AG04449 (cell line): ENCODE measurements at regions of chr18 and their contacts with region 1.

Region 1: DNA sequence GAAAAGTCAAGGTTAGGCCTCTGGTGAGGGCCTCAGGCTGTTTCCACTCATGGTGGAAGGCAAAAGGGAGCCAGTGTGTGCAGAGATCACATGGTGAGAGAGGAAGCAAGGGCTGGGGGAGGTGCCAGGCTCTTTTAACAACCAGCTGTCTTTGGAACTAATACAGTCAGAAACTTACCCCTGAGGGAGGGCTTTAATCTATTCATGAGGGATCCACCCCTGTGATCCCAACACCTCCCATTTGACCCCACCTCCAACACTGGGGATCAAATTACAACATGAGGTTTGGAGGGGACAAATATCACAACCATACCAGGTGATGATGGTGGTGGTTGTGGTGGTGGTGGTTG is 10.9 kb downstream of the POLI start:
- DNase-seq: no peak
- H3K4me3 ChIP-seq: no peak overlapping the region
- CTCF ChIP-seq: no peak

Region 2: GRCh38 chr18:54269893-54270844 is 10.0 kb before region 1 on chr18:
- CTCF ChIA-PET with region 1: interaction called, 16 read pairs
- POLR2A ChIA-PET with region 1: no interaction called
- DNase-seq: no peak
- H3K4me3 ChIP-seq: peak overlapping the region; percentile 71
- CTCF ChIP-seq: peak; percentile 9